ENCODE measurements at regions of chrX and their contacts with region 1.

Region 1: DNA sequence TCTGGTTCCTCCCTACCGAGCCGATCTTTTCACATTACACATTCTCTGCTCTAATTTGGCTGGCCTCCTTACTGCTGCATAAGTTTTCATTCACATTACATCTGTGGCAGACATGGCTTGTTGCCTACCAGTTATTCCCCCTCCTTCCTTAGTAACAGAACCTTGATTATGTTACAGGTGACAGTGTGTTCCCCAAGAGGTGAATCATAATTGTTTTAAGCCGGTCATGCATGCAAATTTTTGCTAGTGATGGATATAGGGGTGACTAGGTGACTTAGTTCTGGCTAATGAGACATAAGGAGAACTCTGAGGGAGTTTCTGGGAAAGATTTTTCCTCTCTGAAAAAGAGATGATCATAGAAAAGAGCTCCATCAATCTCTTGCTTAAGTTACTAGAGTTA is 8.4 kb upstream of the LAMP2 start:
- DNase-seq: no peak
- H3K4me3 ChIP-seq: no peak overlapping the region
- H3K27ac ChIP-seq: no peak overlapping the region
- H3K4me1 ChIP-seq: no peaks in the 10 kb centered on the region
- H3K27me3 ChIP-seq: peaks cover 3% of the 10 kb centered on the region
- CTCF ChIP-seq: no peak
- POLR2A ChIP-seq: no peak

Region 2: GRCh38 chrX:120365320-120365719 is 112.1 kb before region 1 on chrX:
- intact Hi-C with region 1: loop called in 1 of 2 experiments (anchors 5 kb)
- DNase-seq: peak; percentile 22 to 70 (median 40)
- H3K4me3 ChIP-seq: no peak overlapping the region
- H3K27ac ChIP-seq: no peak overlapping the region
- H3K4me1 ChIP-seq: no peaks in the 10 kb centered on the region
- H3K27me3 ChIP-seq: no peaks in the 10 kb centered on the region
- CTCF ChIP-seq: peak in 4 of 6 experiments; percentile 11 to 41 (median 38)
- POLR2A ChIP-seq: no peak